Activated CD8-positive, alpha-beta memory T cell treated with anti-CD3 and anti-CD28 coated beads, Interleukin-2, amount 10 ng/mL, durations not matched to agents 7 days and 5 days (primary cell): ENCODE measurements at regions of chr2 and their contacts with region 1.

Region 1: GRCh38 chr2:85282914-85283313 is 44.9 kb downstream of the TGOLN2 start:
- DNase-seq: no peak
- ATAC-seq: no peak
- H3K4me3 Mint-ChIP-seq: no peak overlapping the region
- H3K27ac Mint-ChIP-seq: no peak overlapping the region
- H3K4me1 Mint-ChIP-seq: peaks cover 12% of the 10 kb centered on the region
- H3K27me3 Mint-ChIP-seq: peaks cover 6% of the 10 kb centered on the region

Region 2: GRCh38 chr2:85266146-85267041 is 16.5 kb before region 1 on chr2:
- CTCF ChIA-PET with region 1: interaction called, 44 read pairs
- DNase-seq: peak; percentile 79
- ATAC-seq: peak; percentile 80
- H3K4me3 Mint-ChIP-seq: no peak overlapping the region
- H3K27ac Mint-ChIP-seq: no peak overlapping the region
- H3K4me1 Mint-ChIP-seq: no peaks in the 10 kb centered on the region
- H3K27me3 Mint-ChIP-seq: peaks cover 20% of the 10 kb centered on the region

Region 3: DNA sequence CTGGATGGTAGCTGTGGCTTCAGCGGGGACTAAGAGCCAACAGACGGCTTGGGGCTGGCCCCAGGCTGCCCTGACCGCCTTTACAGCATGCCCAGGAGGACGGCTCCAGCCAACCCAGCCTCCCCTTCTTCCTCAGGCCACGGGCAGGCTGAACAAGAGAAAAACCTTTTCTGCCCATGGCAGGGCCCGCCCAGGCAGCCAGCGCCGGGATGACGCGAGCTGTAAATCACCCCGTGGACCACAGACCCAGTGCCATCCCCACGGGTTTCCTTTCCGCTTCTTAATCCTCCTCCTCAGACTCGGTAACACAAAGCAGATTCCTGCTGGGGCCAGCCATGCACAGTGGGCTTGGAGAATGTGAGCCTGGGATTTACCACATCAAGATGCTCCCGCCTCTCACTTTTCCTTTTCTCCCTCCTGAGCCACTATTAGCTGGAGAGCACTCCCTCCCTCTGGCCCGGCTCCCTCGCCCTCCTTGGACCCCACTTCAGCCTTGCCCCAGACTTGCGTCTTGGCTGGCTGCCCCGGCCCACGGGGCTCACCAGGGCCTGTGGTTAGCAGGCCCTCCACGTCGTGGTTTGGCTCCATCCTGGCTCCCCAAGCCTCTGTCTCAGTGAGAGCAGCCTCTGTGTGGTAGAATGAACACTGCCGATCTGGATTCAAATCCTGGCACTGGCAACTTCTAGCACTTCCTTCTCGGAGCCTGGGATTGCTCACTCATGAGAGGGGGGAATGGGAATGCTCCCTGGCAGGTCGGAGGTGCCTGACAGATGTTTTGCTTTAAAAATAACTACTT is 502.3 kb after region 1 on chr2:
- CTCF ChIA-PET with region 1: no interaction called
- DNase-seq: no peak
- ATAC-seq: peak; percentile 36
- H3K4me3 Mint-ChIP-seq: no peak overlapping the region
- H3K27ac Mint-ChIP-seq: no peak overlapping the region
- H3K4me1 Mint-ChIP-seq: peaks cover 8% of the 10 kb centered on the region
- H3K27me3 Mint-ChIP-seq: peaks cover 14% of the 10 kb centered on the region